Dendritic cell treated with granulocyte-macrophage colony-stimulating factor and Interleukin-4, amounts not matched to agents 40 ng/mL and 50 ng/mL, for 4 days (primary cell): ENCODE measurements at regions of chr4 and their contacts with region 1.

Region 1: DNA sequence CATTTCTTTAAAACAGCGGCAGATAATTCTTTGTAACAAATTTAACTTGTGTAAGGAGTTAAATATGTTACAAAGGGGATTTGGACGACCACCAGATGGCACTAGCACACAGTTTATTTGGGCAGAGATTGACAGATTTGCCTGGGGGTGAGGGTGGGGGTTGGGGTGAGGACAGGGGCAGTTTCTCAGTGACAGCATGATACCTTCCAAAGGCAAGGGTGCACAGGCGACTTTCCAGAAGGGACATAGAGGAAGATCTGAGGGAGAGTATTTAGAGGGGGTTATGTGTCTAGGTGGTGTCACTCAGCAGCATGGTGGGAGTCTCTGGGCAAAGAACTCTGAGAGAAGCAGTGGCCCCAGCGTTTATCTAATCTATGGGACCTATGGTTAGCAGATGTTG is 9.6 kb upstream of the TMA16 start:
- H3K4me3 Mint-ChIP-seq: no peak overlapping the region
- H3K27ac Mint-ChIP-seq: no peak overlapping the region
- H3K4me1 Mint-ChIP-seq: peaks cover 5% of the 10 kb centered on the region
- H3K27me3 Mint-ChIP-seq: no peaks in the 10 kb centered on the region

Region 2: GRCh38 chr4:163544407-163545038 is 59.6 kb after region 1 on chr4:
- intact Hi-C with region 1: loop called (anchors 2 kb)
- H3K4me3 Mint-ChIP-seq: no peak overlapping the region
- H3K27ac Mint-ChIP-seq: no peak overlapping the region
- H3K4me1 Mint-ChIP-seq: no peaks in the 10 kb centered on the region
- H3K27me3 Mint-ChIP-seq: no peaks in the 10 kb centered on the region

Region 3: DNA sequence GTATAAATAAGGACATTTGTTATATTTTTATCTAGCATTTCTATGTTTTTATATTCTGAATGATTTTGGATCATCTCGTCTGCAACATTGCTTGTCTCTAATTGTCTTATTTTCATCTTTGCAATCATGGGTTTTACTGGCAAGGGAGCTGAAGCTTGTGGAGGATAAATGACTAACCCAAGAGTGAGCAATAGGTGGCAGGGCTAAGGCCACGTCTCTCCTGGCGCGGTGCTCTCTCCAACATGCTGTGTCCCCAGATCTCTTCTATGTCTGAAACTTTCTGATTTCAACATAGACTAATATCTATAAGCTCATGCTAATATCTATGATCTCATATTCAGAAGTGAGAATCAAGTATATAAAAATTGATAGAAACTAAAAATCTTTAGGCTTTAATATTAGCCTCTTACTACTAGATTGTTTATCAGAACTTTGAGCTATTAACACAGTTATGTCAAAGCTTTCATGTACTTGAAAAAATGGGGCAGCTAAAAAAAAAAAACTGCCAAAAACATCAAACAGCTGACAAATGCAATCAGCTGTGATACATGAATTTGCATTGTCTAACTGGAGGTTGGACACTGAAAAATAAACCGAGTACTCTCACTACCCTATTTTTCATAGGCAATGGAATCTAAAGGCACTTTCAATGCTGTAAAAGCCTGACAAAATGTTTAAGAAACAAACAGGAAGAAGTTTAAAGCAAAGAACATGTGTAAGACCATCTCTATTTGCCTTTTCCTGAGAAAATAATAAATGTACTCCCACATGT is 178.7 kb after region 1 on chr4:
- intact Hi-C with region 1: loop called (anchors 5 kb)
- H3K4me3 Mint-ChIP-seq: peak overlapping the region; percentile 9
- H3K27ac Mint-ChIP-seq: peak overlapping the region; percentile 88
- H3K4me1 Mint-ChIP-seq: peaks cover 42% of the 10 kb centered on the region
- H3K27me3 Mint-ChIP-seq: no peaks in the 10 kb centered on the region

Region 4: GRCh38 chr4:163681208-163681821 is 196.4 kb after region 1 on chr4:
- intact Hi-C with region 1: loop called (anchors 5 kb)
- H3K4me3 Mint-ChIP-seq: no peak overlapping the region
- H3K27ac Mint-ChIP-seq: no peak overlapping the region
- H3K4me1 Mint-ChIP-seq: peaks cover 21% of the 10 kb centered on the region
- H3K27me3 Mint-ChIP-seq: peaks cover 2% of the 10 kb centered on the region

Region 5: GRCh38 chr4:163755013-163755412 is 270.1 kb after region 1 on chr4:
- intact Hi-C with region 1: loop called (anchors 5 kb)
- H3K4me3 Mint-ChIP-seq: no peak overlapping the region
- H3K27ac Mint-ChIP-seq: no peak overlapping the region
- H3K4me1 Mint-ChIP-seq: no peaks in the 10 kb centered on the region
- H3K27me3 Mint-ChIP-seq: peaks cover 3% of the 10 kb centered on the region